Heart right ventricle (tissue), 16 donors: ENCODE measurements at regions of chr9 and their contacts with region 1.

Region 1: GRCh38 chr9:96818535-96818934 is 35.8 kb downstream of the ZNF782 start:
- DNase-seq: no peak
- ATAC-seq: no peak
- H3K4me3 ChIP-seq: no peak overlapping the region
- H3K27ac ChIP-seq: no peak overlapping the region
- H3K4me1 ChIP-seq: no peaks in the 10 kb centered on the region
- H3K27me3 ChIP-seq: no peaks in the 10 kb centered on the region
- CTCF ChIP-seq: no peak

Region 2: GRCh38 chr9:96762568-96762967 is 56.0 kb before region 1 on chr9:
- intact Hi-C with region 1: loop called in 1 of 10 experiments (anchors 10 kb)
- DNase-seq: no peak
- ATAC-seq: no peak
- H3K4me3 ChIP-seq: no peak overlapping the region
- H3K27ac ChIP-seq: no peak overlapping the region
- H3K4me1 ChIP-seq: no peaks in the 10 kb centered on the region
- H3K27me3 ChIP-seq: no peaks in the 10 kb centered on the region
- CTCF ChIP-seq: no peak

Region 3: DNA sequence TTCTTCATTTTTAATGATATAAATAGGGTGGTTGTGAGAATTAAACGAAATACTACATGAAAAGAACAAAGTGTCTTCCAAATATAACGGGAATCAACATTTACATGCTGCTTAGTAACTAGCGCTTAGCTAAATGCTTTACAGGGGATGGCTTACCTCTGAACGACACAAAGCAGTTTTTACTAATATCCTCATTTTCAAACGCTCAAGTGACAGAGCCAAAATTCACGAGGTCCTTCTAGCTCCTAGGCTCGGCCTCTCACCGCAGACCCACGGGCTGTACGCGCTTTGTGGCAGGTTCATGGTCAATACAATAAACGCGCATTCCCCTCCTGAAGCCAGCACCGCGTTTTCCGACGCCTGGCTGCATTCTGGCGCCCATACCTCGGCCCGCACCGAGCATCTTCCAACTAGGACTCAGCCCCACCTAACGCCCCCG is 41.1 kb before region 1 on chr9:
- intact Hi-C with region 1: no loop called
- DNase-seq: no peak
- ATAC-seq: no peak
- H3K4me3 ChIP-seq: peak overlapping the region; percentile 60 to 91 (median 80)
- H3K27ac ChIP-seq: peak overlapping the region; percentile 19 to 88 (median 81)
- H3K4me1 ChIP-seq: peaks cover 0 to 28% (median 18%) of the 10 kb centered on the region in 9 donors
- H3K27me3 ChIP-seq: no peaks in the 10 kb centered on the region
- CTCF ChIP-seq: no peak

Region 4: GRCh38 chr9:96854073-96854876 is 35.7 kb after region 1 on chr9 and contains the start of gene ZNF782:
- intact Hi-C with region 1: no loop called
- DNase-seq: peak; percentile 91 to 95
- ATAC-seq: peak; percentile 99 to 100 (median 99)
- H3K4me3 ChIP-seq: peak within 1 kb of the TSS; percentile 66 to 90 (median 82)
- H3K27ac ChIP-seq: peak within 1 kb of the TSS in 9 of 10 donors; percentile 61 to 88 (median 84)
- H3K4me1 ChIP-seq: peaks cover 4 to 33% (median 21%) of the 10 kb centered on the region in 9 donors
- H3K27me3 ChIP-seq: no peaks in the 10 kb centered on the region
- CTCF ChIP-seq: no peak
- total RNA-seq, gene ZNF782: 1.9 to 4.8 (median 3.1) TPM